OCI-LY7 (cell line): ENCODE measurements at regions of chr7 and their contacts with region 1.

Region 1: DNA sequence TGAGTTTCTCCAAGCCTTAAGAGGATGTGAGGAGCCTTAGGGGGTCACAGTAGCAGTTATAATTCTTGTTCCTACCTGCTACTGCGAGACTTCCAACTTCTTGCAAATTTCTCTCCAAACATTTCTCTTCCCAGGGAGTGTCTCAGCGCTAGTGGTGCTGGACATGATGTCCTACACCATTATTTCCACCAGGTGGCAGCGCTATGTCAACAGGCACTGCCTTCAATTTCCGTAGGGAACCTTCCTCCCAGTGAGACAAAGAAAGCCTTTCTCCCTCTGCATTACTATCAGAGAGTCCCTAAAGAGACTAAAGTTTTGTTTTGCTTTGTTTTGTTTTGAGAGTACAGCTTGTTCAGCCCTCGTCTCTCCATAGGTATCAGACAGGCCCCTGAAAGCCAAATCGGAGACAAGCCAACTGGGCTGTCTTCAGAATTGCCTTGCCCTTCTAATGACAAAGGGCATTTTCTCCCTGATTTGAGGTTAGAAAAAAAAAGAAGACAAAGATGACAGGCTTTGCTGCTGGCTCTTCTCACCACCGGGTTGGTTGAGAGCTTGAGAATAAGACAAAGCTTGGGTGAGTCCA is 44.2 kb upstream of the GGCT start:
- DNase-seq: peak; percentile 61
- H3K4me3 ChIP-seq: no peak overlapping the region
- H3K27ac ChIP-seq: no peak overlapping the region
- H3K4me1 ChIP-seq: peaks cover 43% of the 10 kb centered on the region
- CTCF ChIP-seq: peak; percentile 91

Region 2: GRCh38 chr7:30510124-30511075 is 38.5 kb before region 1 on chr7:
- CTCF ChIA-PET with region 1: interaction called, 4 read pairs
- POLR2A ChIA-PET with region 1: interaction called, 5 read pairs
- intact Hi-C with region 1: loop called (anchors 5 kb)
- DNase-seq: peak; percentile 57
- H3K4me3 ChIP-seq: no peak overlapping the region
- H3K27ac ChIP-seq: no peak overlapping the region
- H3K4me1 ChIP-seq: peaks cover under 1% of the 10 kb centered on the region
- CTCF ChIP-seq: peak; percentile 99

Region 3: GRCh38 chr7:30533886-30534285 is 15.0 kb before region 1 on chr7:
- CTCF ChIA-PET with region 1: no interaction called
- POLR2A ChIA-PET with region 1: interaction called, 13 read pairs
- intact Hi-C with region 1: no loop called
- DNase-seq: no peak
- H3K4me3 ChIP-seq: no peak overlapping the region
- H3K27ac ChIP-seq: no peak overlapping the region
- H3K4me1 ChIP-seq: no peaks in the 10 kb centered on the region
- CTCF ChIP-seq: no peak